CD4-positive, alpha-beta T cell (primary cell): ENCODE measurements at regions of chr2 and their contacts with region 1.

Region 1: GRCh38 chr2:240513549-240514287 is 44.1 kb downstream of the ANKMY1 start:
- DNase-seq: peak; percentile 76 to 92 (median 80)
- ATAC-seq: peak; percentile 99
- H3K4me3 ChIP-seq: no peak overlapping the region
- H3K4me3 Mint-ChIP-seq: no peak overlapping the region
- H3K27ac ChIP-seq: no peak overlapping the region
- H3K27ac Mint-ChIP-seq: peak overlapping the region; percentile 55
- H3K4me1 ChIP-seq: peaks cover 15% of the 10 kb centered on the region
- H3K4me1 Mint-ChIP-seq: peaks cover 6% of the 10 kb centered on the region
- H3K27me3 ChIP-seq: no peaks in the 10 kb centered on the region
- H3K27me3 Mint-ChIP-seq: no peaks in the 10 kb centered on the region
- CTCF ChIP-seq: peak; percentile 90

Region 2: DNA sequence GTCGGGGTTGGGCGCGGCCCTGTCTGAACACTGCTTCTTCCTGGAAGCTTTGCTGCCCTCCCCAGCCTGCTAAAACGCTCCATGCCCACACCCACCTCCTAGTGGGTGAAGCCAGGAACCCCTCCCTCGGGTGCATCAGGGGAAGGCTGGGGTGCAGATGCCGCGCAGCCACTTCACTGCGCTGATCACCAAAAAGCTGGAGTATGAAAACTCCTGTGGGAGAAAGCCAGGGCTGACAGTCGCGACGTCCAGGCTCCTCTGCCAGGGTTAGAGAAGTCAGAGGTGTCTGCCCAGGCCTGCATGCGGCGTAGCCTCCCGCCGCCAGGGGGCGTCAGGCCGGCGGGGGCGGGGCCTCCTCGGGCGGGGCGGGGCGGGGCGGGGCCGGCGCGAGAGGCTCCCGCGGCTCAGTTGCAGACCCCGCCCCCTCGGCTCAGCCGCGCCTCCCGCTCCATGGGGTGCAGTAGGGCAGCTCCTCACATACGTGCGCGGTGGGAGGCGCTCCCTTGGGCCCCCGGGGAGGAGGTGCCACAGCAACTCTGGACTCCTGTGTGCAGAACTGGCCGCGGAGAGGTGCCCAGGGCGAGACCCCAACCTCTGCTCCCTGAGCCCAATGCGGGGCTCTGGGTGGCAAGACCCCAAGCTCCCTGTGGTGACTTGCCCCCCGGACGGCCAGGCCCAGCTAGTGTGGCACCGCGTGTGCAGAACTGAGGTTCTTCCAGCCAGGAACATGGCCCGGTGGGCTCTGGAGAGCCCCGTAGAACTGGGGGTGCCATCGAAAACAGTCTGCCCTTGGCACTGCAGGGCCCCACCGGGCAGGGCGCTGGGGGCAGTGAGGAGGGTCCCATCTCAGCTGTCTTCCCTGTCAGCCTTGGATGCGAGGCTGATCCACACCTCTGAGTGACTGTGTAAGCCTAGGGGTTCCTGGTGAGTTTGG is 52.8 kb after region 1 on chr2:
- CTCF ChIA-PET with region 1: interaction called, 31 read pairs
- POLR2A ChIA-PET with region 1: interaction called, 18 read pairs
- intact Hi-C with region 1: loop called in 1 of 2 experiments (anchors 10 kb)
- DNase-seq: peak; percentile 89 to 98 (median 95)
- ATAC-seq: peak; percentile 60
- H3K4me3 ChIP-seq: peak overlapping the region; percentile 87
- H3K4me3 Mint-ChIP-seq: peak overlapping the region; percentile 96
- H3K27ac ChIP-seq: peak overlapping the region; percentile 91 to 97
- H3K27ac Mint-ChIP-seq: peak overlapping the region; percentile 98
- H3K4me1 ChIP-seq: peaks cover 88% of the 10 kb centered on the region
- H3K4me1 Mint-ChIP-seq: peaks cover 84% of the 10 kb centered on the region
- H3K27me3 ChIP-seq: no peaks in the 10 kb centered on the region
- H3K27me3 Mint-ChIP-seq: no peaks in the 10 kb centered on the region
- CTCF ChIP-seq: peak; percentile 86

Region 3: GRCh38 chr2:240579771-240580614 is 66.3 kb after region 1 on chr2:
- CTCF ChIA-PET with region 1: interaction called, 22 read pairs
- POLR2A ChIA-PET with region 1: no interaction called
- intact Hi-C with region 1: loop called in 1 of 2 experiments (anchors 2 kb)
- DNase-seq: peak; percentile 68 to 93 (median 78)
- ATAC-seq: peak; percentile 97
- H3K4me3 ChIP-seq: no peak overlapping the region
- H3K4me3 Mint-ChIP-seq: peak overlapping the region; percentile 18
- H3K27ac ChIP-seq: peak overlapping the region; percentile 59 to 69
- H3K27ac Mint-ChIP-seq: peak overlapping the region; percentile 77
- H3K4me1 ChIP-seq: peaks cover 57% of the 10 kb centered on the region
- H3K4me1 Mint-ChIP-seq: peaks cover 33% of the 10 kb centered on the region
- H3K27me3 ChIP-seq: no peaks in the 10 kb centered on the region
- H3K27me3 Mint-ChIP-seq: no peaks in the 10 kb centered on the region
- CTCF ChIP-seq: peak; percentile 66

Region 4: GRCh38 chr2:240704651-240705050 is 190.9 kb after region 1 on chr2:
- CTCF ChIA-PET with region 1: no interaction called
- POLR2A ChIA-PET with region 1: no interaction called
- intact Hi-C with region 1: loop called in 1 of 2 experiments (anchors 10 kb)
- DNase-seq: peak in 7 of 14 experiments; percentile 9 to 64 (median 32)
- ATAC-seq: peak; percentile 54
- H3K4me3 ChIP-seq: no peak overlapping the region
- H3K4me3 Mint-ChIP-seq: no peak overlapping the region
- H3K27ac ChIP-seq: no peak overlapping the region
- H3K27ac Mint-ChIP-seq: no peak overlapping the region
- H3K4me1 ChIP-seq: peaks cover 20% of the 10 kb centered on the region
- H3K4me1 Mint-ChIP-seq: peaks cover 12% of the 10 kb centered on the region
- H3K27me3 ChIP-seq: no peaks in the 10 kb centered on the region
- H3K27me3 Mint-ChIP-seq: peaks cover 20% of the 10 kb centered on the region
- CTCF ChIP-seq: no peak

Region 5: DNA sequence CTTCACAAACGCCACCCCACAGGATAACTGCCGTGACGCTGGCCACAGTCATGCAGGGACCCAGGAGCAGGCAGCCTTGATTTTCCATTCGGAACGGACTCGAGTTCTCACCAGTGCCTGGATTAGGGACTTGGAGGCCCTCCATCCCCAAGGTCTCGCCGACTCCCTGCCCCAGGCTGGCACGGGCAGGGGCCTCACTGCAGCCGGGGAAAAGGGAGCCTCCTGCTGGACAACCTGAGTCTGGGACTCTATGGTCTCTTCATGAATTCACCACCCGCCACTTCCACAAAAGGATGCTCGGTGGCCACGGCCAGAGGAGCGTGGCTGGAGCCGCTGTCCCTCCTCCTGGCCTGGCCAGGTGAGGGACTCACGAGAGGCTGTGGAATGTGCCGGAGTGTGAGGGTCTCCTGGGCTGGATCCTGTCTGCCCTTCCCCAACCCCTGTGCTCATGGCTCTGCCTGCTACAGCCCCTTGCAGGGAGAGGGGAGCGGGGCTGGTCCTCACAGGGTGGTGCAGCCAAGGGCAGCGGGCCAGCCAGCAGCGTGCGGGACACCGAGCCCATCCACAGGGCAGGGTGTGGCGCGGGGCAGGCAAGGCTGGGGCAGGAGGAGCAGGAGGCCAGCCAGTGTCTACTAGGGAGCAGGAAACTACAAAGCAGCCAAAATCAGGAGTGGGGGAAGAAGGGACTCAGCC is 220.2 kb after region 1 on chr2:
- CTCF ChIA-PET with region 1: no interaction called
- POLR2A ChIA-PET with region 1: no interaction called
- intact Hi-C with region 1: loop called (anchors 1 to 10 kb)
- DNase-seq: peak in 8 of 14 experiments; percentile 9 to 54 (median 14)
- ATAC-seq: peak; percentile 44
- H3K4me3 ChIP-seq: no peak overlapping the region
- H3K4me3 Mint-ChIP-seq: no peak overlapping the region
- H3K27ac ChIP-seq: no peak overlapping the region
- H3K27ac Mint-ChIP-seq: no peak overlapping the region
- H3K4me1 ChIP-seq: no peaks in the 10 kb centered on the region
- H3K4me1 Mint-ChIP-seq: no peaks in the 10 kb centered on the region
- H3K27me3 ChIP-seq: no peaks in the 10 kb centered on the region
- H3K27me3 Mint-ChIP-seq: peaks cover 4% of the 10 kb centered on the region
- CTCF ChIP-seq: peak; percentile 33

Region 6: GRCh38 chr2:240840435-240841080 is 326.8 kb after region 1 on chr2:
- CTCF ChIA-PET with region 1: no interaction called
- POLR2A ChIA-PET with region 1: interaction called, 3 read pairs
- intact Hi-C with region 1: loop called (anchors 1 to 2 kb)
- DNase-seq: peak in 5 of 14 experiments; percentile 13 to 45 (median 34)
- ATAC-seq: no peak
- H3K4me3 ChIP-seq: no peak overlapping the region
- H3K4me3 Mint-ChIP-seq: no peak overlapping the region
- H3K27ac ChIP-seq: no peak overlapping the region
- H3K27ac Mint-ChIP-seq: no peak overlapping the region
- H3K4me1 ChIP-seq: no peaks in the 10 kb centered on the region
- H3K4me1 Mint-ChIP-seq: no peaks in the 10 kb centered on the region
- H3K27me3 ChIP-seq: peaks cover 0 to 4% of the 10 kb centered on the region in 2 experiments
- H3K27me3 Mint-ChIP-seq: peaks cover 7% of the 10 kb centered on the region
- CTCF ChIP-seq: peak; percentile 16